H1 (cell line): ENCODE measurements at regions of chr15 and their contacts with region 1.

Region 1: DNA sequence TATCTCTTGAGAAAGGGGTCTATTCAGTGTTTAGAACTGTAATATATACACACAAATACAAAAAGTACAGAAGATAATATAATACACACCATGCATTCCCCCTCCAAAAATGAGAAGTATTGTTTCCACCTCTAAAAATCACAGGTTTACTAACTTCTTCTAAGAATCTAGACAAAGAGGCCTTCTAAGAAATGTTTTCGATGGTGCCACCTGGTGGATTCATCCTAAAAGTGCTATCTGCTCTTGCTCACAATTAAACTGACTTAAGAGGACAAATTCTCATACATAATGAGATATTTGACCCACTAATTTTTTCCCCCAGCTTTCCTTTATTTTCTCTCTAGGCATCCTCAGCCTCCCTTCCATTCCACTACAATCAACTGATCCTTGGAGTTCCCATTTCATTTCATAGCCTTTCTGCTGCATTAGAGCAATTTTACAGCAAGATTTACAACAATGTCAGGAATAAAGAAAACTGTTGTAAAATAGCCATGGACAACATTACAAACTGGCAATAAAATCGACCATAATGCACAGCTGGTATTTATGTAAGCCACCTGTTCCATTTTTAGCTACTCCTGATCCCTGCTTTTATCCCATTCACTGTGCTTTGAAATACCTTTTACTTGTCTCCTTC is 124.6 kb downstream of the ARRDC4 start:
- DNase-seq: no peak
- H3K4me3 ChIP-seq: no peak overlapping the region
- H3K27ac ChIP-seq: no peak overlapping the region
- H3K4me1 ChIP-seq: no peaks in the 10 kb centered on the region
- H3K27me3 ChIP-seq: no peaks in the 10 kb centered on the region
- CTCF ChIP-seq: peak in 2 of 3 experiments; percentile 38 to 57; a peak in 2 of 4 replicates
- EP300 ChIP-seq: no peak
- POLR2A ChIP-seq: no peak
- RAD21 ChIP-seq: peak; percentile 56 to 61

Region 2: DNA sequence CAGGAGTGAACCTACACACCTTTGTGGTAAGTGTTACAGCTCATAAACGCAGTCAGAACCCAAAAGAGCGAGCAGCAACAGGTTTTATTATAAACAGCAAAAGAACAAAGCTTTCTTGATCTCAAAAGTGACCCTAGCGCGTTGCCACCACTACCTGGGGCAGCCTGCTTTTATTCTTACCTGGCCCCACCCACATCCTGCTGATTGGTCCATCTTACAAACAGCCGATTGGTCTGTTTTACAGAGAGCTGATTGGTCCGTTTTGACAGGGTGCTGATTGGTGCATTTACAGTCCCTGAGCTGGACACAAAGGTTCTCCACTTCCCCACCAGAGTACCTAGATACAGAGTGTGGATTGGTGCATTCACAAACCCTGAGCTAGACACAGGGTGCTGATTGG is 18.4 kb after region 1 on chr15:
- CTCF ChIA-PET with region 1: interaction called, 12 read pairs
- POLR2A ChIA-PET with region 1: no interaction called
- DNase-seq: no peak
- H3K4me3 ChIP-seq: no peak overlapping the region
- H3K27ac ChIP-seq: no peak overlapping the region
- H3K4me1 ChIP-seq: no peaks in the 10 kb centered on the region
- H3K27me3 ChIP-seq: no peaks in the 10 kb centered on the region
- CTCF ChIP-seq: no peak
- EP300 ChIP-seq: no peak
- POLR2A ChIP-seq: no peak
- RAD21 ChIP-seq: no peak

Region 3: DNA sequence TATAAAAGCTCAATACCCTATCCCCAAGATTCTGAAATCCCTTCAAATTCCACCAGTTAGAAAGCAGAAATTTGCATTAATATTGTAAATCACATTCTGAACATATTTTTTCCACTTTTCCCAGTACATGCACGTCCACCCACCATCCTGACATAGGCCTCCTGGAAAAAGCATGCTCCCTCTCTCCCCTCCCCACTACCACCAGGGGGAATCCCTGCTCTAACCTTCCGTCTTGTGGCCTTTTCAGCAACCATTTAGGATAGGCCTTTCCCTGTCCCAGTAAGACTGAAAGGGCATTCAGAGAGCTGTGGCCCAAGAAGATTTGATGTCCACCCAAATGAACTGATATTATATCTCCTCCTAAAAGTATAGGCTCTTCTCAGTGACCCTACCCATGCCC is 57.5 kb after region 1 on chr15:
- CTCF ChIA-PET with region 1: no interaction called
- POLR2A ChIA-PET with region 1: no interaction called
- DNase-seq: no peak
- H3K4me3 ChIP-seq: no peak overlapping the region
- H3K27ac ChIP-seq: no peak overlapping the region
- H3K4me1 ChIP-seq: no peaks in the 10 kb centered on the region; a peak in 1 of 7 replicates
- H3K27me3 ChIP-seq: 0 out of 7 replicates have a peak, but pooled peaks cover 0 to 3% (median 0%) of the 10 kb centered on the region in 4 experiments
- CTCF ChIP-seq: peak; percentile 68 to 74 (median 72)
- EP300 ChIP-seq: no peak
- POLR2A ChIP-seq: no peak
- RAD21 ChIP-seq: peak; percentile 78 to 81